AG04449 (cell line): ENCODE measurements at regions of chr11 and their contacts with region 1.

Region 1: GRCh38 chr11:79440441-79441194 is at the start of gene TENM4:
- DNase-seq: peak; percentile 40
- H3K4me3 ChIP-seq: peak within 1 kb of the TSS; percentile 70
- CTCF ChIP-seq: peak; percentile 21

Region 2: DNA sequence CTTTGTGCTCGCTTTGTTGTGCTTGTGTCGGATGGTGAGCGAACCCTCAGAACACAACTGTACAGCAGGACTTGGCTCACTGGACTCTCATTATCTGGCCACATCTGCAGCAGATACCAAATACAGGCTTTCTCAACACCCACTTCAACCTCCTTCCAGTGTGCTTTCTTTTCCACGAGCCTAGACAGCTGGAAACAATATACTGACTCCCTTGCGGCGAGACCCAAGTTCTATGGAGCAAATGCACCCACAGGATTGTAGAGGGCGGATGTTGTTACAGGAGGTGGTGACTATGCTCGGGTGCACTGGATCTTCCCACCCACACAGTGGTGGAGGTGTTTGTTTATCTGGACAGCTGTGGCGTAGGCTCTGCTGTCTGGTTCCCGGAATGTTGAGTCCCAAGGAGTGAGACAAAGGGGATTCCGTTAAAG is 204.1 kb before region 1 on chr11:
- CTCF ChIA-PET with region 1: no interaction called
- POLR2A ChIA-PET with region 1: interaction called, 15 read pairs
- DNase-seq: peak; percentile 76
- H3K4me3 ChIP-seq: no peak overlapping the region
- CTCF ChIP-seq: no peak

Region 3: GRCh38 chr11:79461144-79461543 is 20.5 kb after region 1 on chr11:
- CTCF ChIA-PET with region 1: interaction called, 20 read pairs
- POLR2A ChIA-PET with region 1: interaction called, 3 read pairs
- DNase-seq: no peak
- H3K4me3 ChIP-seq: no peak overlapping the region
- CTCF ChIP-seq: peak; percentile 63

Region 4: DNA sequence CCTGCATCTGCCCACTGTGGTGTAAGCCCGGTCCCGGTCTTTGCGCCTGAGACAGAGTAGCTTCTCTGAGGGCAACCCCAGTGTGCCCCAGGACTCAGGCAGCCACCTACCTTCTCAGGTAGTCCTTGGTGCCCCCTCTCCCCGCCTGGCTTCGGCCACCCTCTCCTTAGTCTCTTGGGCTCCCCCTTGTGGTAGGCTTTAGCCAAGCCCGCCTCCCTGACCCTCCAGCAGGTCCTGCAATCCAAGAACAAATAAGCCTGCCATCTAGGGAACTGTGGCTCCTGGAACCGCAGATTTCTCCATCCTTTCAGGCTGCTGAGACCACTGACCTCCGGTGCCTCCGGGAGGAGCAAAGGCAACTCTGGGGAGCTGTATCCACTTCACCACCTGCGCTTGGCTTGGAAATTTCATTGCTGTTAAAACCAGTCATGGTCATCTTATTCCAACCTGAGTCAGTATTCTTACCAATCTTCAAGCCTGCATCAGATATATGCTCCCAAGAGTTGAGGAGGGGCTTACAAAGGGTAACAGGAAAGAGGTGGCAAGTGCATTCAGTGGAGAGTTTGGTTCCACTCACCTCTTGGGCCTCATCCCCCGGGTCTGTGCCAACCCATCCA is 53.0 kb after region 1 on chr11:
- CTCF ChIA-PET with region 1: interaction called, 14 read pairs
- POLR2A ChIA-PET with region 1: no interaction called
- DNase-seq: no peak
- H3K4me3 ChIP-seq: no peak overlapping the region
- CTCF ChIP-seq: peak; percentile 96

Region 5: GRCh38 chr11:79578116-79578768 is 137.6 kb after region 1 on chr11:
- CTCF ChIA-PET with region 1: no interaction called
- POLR2A ChIA-PET with region 1: no interaction called
- DNase-seq: no peak
- H3K4me3 ChIP-seq: no peak overlapping the region
- CTCF ChIP-seq: no peak